Mammary epithelial cell (primary cell): ENCODE measurements at regions of chrX and their contacts with region 1.

Region 1: DNA sequence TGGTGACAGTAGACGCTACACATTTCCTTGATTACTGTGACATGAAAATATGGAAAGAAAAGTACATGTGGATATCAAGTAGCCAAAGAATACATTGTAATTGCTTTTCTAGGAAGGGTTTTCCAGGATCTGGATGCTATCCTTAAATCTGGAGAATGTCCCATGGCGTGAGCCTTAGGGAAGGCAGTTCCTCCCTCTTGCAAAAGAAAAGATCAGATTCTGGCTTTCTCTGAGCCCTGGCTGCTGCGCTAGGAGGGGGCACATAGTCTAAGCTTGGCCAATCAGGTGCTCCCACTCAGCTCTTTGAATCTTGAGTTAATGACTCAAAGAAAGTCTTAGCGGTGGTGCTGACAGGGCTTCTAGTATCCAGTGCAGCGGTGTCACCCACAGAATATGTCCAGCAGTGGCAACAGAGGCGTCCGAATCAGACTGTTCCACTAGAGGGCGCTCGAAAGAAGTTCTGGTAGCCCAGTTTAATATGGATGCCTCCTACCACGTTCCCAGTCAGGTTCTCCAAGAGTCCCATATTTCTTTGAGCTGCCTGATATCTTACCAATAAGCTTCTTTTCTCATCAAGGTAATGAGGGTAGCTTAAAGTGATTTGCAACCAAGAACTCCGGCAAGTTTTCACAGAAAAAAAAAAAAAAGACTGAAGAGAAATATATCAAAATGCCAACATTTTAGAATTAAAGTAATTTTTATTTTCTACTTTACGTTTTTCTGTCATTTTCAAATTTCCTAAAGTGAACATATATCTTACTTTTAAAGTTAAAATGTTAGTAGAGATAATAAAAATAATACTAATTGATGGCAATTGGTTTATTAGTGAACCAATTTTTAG is 213.4 kb upstream of the S100G start:
- DNase-seq: peak; percentile 61
- H3K4me3 ChIP-seq: no peak overlapping the region
- H3K27ac ChIP-seq: no peak overlapping the region
- H3K4me1 ChIP-seq: no peaks in the 10 kb centered on the region
- H3K27me3 ChIP-seq: no peaks in the 10 kb centered on the region
- CTCF ChIP-seq: peak; percentile 69 to 84

Region 2: GRCh38 chrX:15854712-15855567 is 581.6 kb before region 1 on chrX and contains the start of gene AP1S2:
- CTCF ChIA-PET with region 1: no interaction called
- dilution Hi-C with region 1: no loop called
- in situ Hi-C with region 1: no loop called
- intact Hi-C with region 1: loop called (anchors 10 kb)
- DNase-seq: peak; percentile 98
- H3K4me3 ChIP-seq: peak within 1 kb of the TSS; percentile 67 to 90 (median 73)
- H3K27ac ChIP-seq: peak within 1 kb of the TSS; percentile 32
- H3K4me1 ChIP-seq: peaks cover 15% of the 10 kb centered on the region
- H3K27me3 ChIP-seq: no peaks in the 10 kb centered on the region
- CTCF ChIP-seq: no peak
- total RNA-seq, gene AP1S2: 15.8 to 21.6 TPM

Region 3: GRCh38 chrX:15930585-15930984 is 506.0 kb before region 1 on chrX:
- CTCF ChIA-PET with region 1: no interaction called
- dilution Hi-C with region 1: no loop called
- in situ Hi-C with region 1: no loop called
- intact Hi-C with region 1: loop called (anchors 1 kb)
- DNase-seq: peak; percentile 45
- H3K4me3 ChIP-seq: no peak overlapping the region
- H3K27ac ChIP-seq: no peak overlapping the region
- H3K4me1 ChIP-seq: no peaks in the 10 kb centered on the region
- H3K27me3 ChIP-seq: peaks cover 1% of the 10 kb centered on the region
- CTCF ChIP-seq: peak; percentile 36 to 65

Region 4: DNA sequence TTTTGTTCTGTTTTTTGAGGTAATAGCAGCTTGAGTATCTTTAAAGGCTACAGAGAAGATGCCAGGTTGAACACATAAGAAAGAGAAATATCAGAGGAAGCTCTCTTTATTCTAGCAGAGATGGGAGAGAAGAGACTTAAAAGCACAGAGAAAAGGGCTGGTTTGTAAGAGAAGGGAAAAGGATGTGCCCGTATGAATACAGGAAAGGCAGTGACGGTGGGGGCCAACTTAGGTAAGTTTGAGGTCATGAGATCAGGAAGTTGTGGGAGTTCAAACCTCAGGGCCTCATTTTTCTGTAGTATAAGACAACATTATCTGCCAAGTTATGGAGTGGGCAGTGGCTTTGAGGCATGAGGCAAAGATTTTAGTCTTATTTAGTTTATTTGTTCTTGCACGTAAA is 92.1 kb after region 1 on chrX:
- CTCF ChIA-PET with region 1: no interaction called
- dilution Hi-C with region 1: no loop called
- in situ Hi-C with region 1: no loop called
- intact Hi-C with region 1: no loop called
- DNase-seq: no peak
- H3K4me3 ChIP-seq: no peak overlapping the region
- H3K27ac ChIP-seq: no peak overlapping the region
- H3K4me1 ChIP-seq: no peaks in the 10 kb centered on the region
- H3K27me3 ChIP-seq: no peaks in the 10 kb centered on the region
- CTCF ChIP-seq: no peak

Region 5: DNA sequence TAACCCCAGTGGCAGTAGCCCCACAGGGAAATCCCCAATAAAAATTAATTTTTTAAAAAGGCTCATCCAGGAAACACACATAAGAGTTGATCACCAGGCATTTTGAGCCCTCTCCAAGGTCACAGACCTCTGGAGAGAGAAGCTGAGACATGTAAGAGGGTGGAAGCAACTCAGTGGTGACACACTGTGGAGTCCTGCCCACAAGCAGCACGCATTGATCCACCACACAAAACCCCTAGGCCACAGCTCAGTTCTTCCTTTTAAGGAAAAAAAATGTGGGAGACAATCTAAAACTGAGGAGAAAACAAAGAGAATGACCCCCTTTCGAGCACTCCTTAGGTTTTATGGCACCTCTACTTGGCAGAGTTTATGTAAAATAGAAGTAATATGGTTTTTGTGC is 141.7 kb after region 1 on chrX:
- CTCF ChIA-PET with region 1: interaction called, 7 read pairs
- dilution Hi-C with region 1: no loop called
- in situ Hi-C with region 1: no loop called
- intact Hi-C with region 1: loop called (anchors 1 kb)
- DNase-seq: peak; percentile 54
- H3K4me3 ChIP-seq: no peak overlapping the region
- H3K27ac ChIP-seq: no peak overlapping the region
- H3K4me1 ChIP-seq: peaks cover 8% of the 10 kb centered on the region
- H3K27me3 ChIP-seq: no peaks in the 10 kb centered on the region
- CTCF ChIP-seq: peak in 1 of 2 donors; percentile 40

Region 6: GRCh38 chrX:16664074-16664473 is 227.5 kb after region 1 on chrX:
- CTCF ChIA-PET with region 1: interaction called, 6 read pairs
- dilution Hi-C with region 1: no loop called
- in situ Hi-C with region 1: loop called (anchors 10 kb)
- intact Hi-C with region 1: loop called (anchors 1 kb)
- DNase-seq: no peak
- H3K4me3 ChIP-seq: no peak overlapping the region
- H3K27ac ChIP-seq: no peak overlapping the region
- H3K4me1 ChIP-seq: no peaks in the 10 kb centered on the region
- H3K27me3 ChIP-seq: no peaks in the 10 kb centered on the region
- CTCF ChIP-seq: peak in 1 of 2 donors; percentile 34

Region 7: DNA sequence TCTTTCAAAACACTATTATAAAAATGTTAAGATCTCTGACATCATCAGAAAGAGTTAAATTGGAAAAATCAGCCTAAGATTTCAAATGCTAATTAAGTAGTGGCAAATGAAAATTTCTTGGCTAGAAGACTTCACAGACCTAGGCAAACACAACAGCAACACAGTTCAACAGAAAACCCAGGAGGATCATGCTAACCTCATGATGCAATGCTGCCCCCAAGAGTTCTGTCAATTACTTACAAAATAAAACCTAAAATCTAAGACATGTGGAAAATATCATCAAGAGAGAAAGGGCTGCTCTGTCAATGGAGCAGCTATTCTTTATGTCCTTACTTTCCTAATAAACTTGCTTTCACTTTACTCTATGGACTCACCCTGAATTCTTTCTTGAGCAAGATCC is 234.4 kb after region 1 on chrX:
- CTCF ChIA-PET with region 1: no interaction called
- dilution Hi-C with region 1: loop called (anchors 5 kb)
- in situ Hi-C with region 1: loop called (anchors 10 kb)
- intact Hi-C with region 1: loop called (anchors 1 kb)
- DNase-seq: peak; percentile 25
- H3K4me3 ChIP-seq: no peak overlapping the region
- H3K27ac ChIP-seq: no peak overlapping the region
- H3K4me1 ChIP-seq: no peaks in the 10 kb centered on the region
- H3K27me3 ChIP-seq: no peaks in the 10 kb centered on the region
- CTCF ChIP-seq: peak; percentile 41 to 53

Region 8: GRCh38 chrX:16695079-16695676 is 258.6 kb after region 1 on chrX:
- CTCF ChIA-PET with region 1: interaction called, 3 read pairs
- dilution Hi-C with region 1: no loop called
- in situ Hi-C with region 1: no loop called
- intact Hi-C with region 1: loop called (anchors 1 kb)
- DNase-seq: peak; percentile 32
- H3K4me3 ChIP-seq: no peak overlapping the region
- H3K27ac ChIP-seq: no peak overlapping the region
- H3K4me1 ChIP-seq: no peaks in the 10 kb centered on the region
- H3K27me3 ChIP-seq: no peaks in the 10 kb centered on the region
- CTCF ChIP-seq: peak; percentile 93 to 97